ENCODE measurements at regions of chr2 and their contacts with region 1.

Region 1: DNA sequence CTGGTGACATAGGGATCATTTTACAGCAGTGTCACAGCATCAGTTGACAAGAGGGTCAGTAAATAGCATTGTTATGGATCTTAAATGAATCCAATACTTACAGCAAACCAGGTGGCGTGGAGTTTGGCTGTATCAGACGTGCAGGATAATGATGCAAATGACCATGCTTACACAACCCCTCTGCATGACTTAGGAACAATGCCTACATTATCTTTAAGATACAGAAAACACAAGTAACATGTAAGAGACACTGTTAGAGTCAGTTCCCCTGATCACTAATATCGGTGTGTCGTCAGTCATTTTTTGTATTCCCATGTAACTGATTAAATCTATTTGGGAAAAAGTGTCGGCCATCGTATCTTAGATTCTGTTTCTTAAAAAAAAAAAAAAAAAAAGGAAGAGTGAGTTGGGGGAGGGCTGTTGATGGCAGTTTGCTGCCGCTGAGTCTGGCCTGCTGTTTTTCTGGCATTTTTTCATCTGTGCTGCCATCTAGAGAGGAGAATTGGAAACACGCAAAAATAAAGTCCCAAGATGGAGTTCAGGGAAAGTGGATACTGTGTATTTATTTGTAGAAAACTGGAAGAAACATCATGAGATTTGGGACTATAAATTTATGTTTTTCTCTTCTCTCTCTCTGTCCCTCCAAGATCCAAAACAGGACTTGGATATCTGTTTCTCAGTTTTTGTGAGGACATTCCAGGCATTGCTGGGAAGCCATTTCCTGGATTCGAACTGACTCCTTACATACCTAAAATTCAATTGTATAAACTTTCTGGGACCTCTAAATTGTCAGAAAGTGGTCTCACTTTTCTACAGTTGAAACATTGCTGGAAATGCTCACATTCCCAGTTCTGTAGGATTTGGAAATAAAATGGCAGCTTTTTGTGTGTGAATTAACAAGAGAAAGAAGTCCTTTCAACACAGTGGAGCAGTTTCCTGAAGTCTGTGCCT is 60.3 kb upstream of the AGPS start:
- DNase-seq: peak in 7 of 9 donors; percentile 37 to 76 (median 72)
- ATAC-seq: peak; percentile 91
- H3K4me3 ChIP-seq: no peak overlapping the region
- H3K4me3 Mint-ChIP-seq: peak overlapping the region in 7 of 10 donors; percentile 3 to 73 (median 38)
- H3K27ac ChIP-seq: no peak overlapping the region
- H3K27ac Mint-ChIP-seq: peak overlapping the region in 8 of 9 donors; percentile 3 to 88 (median 56)
- H3K4me1 ChIP-seq: peaks cover 0 to 18% of the 10 kb centered on the region in 2 donors
- H3K4me1 Mint-ChIP-seq: peaks cover 4 to 33% (median 15%) of the 10 kb centered on the region in 7 donors
- H3K27me3 ChIP-seq: no peaks in the 10 kb centered on the region
- H3K27me3 Mint-ChIP-seq: no peaks in the 10 kb centered on the region

Region 2: DNA sequence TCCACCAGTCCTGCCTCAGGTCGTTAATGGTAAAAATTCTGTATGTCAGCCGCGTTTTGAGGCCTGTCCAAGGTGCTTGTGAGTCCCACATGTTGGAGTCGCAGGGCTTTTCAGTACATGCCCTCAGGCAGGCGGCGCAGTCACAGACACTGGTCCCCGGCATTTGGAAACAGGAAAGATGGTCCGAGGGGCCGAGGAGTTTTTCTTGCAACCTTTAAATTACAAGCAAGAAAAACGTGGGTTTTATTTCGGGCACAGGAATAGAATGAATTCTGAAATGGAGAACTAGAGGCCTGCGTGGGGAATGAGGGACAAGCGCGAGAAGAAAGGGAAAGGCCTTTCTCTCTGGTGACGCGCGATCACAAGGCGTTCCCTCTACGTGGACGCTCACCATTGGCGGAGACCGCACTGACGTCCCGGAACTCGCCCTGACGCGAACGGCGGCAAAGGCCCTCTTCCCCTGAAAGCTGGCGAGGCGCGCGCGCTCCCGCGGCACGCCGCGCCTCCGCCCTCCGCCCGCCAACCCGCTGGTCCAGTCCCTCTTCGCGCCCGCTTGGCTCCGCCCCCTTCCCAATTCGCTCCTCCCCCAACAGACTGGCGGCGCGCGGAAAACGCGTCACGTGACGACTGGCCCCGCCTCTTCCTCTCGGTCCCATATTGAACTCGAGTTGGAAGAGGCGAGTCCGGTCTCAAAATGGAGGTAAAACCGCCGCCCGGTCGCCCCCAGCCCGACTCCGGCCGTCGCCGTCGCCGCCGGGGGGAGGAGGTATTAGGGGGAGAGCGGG is 120.0 kb before region 1 on chr2 and contains the start of gene HNRNPA3:
- CTCF ChIA-PET with region 1: interaction called, 3 read pairs
- POLR2A ChIA-PET with region 1: interaction called, 6 read pairs
- intact Hi-C with region 1: loop called (anchors 1 kb)
- DNase-seq: peak; percentile 99 to 100 (median 100)
- ATAC-seq: peak; percentile 93
- H3K4me3 ChIP-seq: peak within 1 kb of the TSS; percentile 87
- H3K4me3 Mint-ChIP-seq: peak within 1 kb of the TSS; percentile 88 to 96 (median 94)
- H3K27ac ChIP-seq: peak within 1 kb of the TSS; percentile 99
- H3K27ac Mint-ChIP-seq: peak within 1 kb of the TSS; percentile 98 to 100 (median 99)
- H3K4me1 ChIP-seq: peaks cover 38 to 43% of the 10 kb centered on the region in 2 donors
- H3K4me1 Mint-ChIP-seq: peaks cover 27 to 60% (median 48%) of the 10 kb centered on the region in 7 donors
- H3K27me3 ChIP-seq: no peaks in the 10 kb centered on the region
- H3K27me3 Mint-ChIP-seq: peaks cover 0 to 6% (median 0%) of the 10 kb centered on the region in 5 donors
- total RNA-seq, gene HNRNPA3: 151 to 311 (median 184) TPM

Region 3: GRCh38 chr2:177314194-177314593 is 18.1 kb before region 1 on chr2:
- CTCF ChIA-PET with region 1: interaction called, 4 read pairs
- POLR2A ChIA-PET with region 1: interaction called, 18 read pairs
- intact Hi-C with region 1: loop called (anchors 1 to 2 kb)
- DNase-seq: no peak
- ATAC-seq: no peak
- H3K4me3 ChIP-seq: no peak overlapping the region
- H3K4me3 Mint-ChIP-seq: no peak overlapping the region
- H3K27ac ChIP-seq: no peak overlapping the region
- H3K27ac Mint-ChIP-seq: peak overlapping the region in 7 of 9 donors; percentile 36 to 97 (median 73)
- H3K4me1 ChIP-seq: peaks cover 6 to 13% of the 10 kb centered on the region in 2 donors
- H3K4me1 Mint-ChIP-seq: peaks cover 17 to 54% (median 31%) of the 10 kb centered on the region in 7 donors
- H3K27me3 ChIP-seq: no peaks in the 10 kb centered on the region
- H3K27me3 Mint-ChIP-seq: no peaks in the 10 kb centered on the region

Region 4: DNA sequence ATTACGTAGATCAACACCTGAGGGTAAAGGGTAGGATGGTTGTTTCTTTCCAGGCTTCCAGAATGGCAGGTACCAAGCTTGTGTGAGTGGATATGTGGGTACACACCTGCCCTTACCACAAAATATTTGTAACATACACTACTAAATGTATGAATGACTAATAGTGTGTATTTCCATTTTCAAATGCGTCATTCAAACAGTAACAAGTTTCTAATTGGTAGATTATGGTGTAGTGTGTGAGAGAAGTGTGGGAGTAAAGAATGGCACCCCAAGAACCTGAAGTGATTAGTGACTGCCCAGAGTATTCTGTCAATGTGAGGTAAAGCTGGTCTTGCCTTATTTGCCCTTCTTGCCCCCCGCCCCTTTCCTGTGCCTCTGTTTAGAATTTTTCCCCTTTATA is 81.4 kb after region 1 on chr2:
- CTCF ChIA-PET with region 1: interaction called, 55 read pairs
- POLR2A ChIA-PET with region 1: interaction called, 3 read pairs
- intact Hi-C with region 1: loop called (anchors 1 kb)
- DNase-seq: no peak
- ATAC-seq: no peak
- H3K4me3 ChIP-seq: no peak overlapping the region
- H3K4me3 Mint-ChIP-seq: no peak overlapping the region
- H3K27ac ChIP-seq: no peak overlapping the region
- H3K27ac Mint-ChIP-seq: peak overlapping the region in 6 of 9 donors; percentile 7 to 44 (median 23)
- H3K4me1 ChIP-seq: no peaks in the 10 kb centered on the region
- H3K4me1 Mint-ChIP-seq: peaks cover 6 to 57% (median 34%) of the 10 kb centered on the region in 7 donors
- H3K27me3 ChIP-seq: no peaks in the 10 kb centered on the region
- H3K27me3 Mint-ChIP-seq: no peaks in the 10 kb centered on the region

Region 5: DNA sequence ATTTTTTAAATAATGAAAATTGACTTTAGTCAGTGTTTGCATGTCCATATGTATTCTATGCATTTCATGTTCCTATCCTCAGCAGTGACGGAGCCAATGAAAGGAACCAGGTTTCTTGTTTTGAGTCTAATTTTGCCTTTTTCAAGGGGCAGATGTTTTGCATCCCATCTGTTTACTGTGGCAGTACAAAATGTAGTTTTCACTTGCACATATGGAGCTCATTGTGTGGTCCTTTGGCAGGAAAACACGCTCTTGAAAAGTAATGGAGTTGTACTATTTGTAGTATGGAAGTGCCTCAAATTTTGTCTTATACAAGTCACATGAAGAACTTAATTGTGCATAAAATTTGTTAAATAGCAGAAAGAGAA is 188.0 kb after region 1 on chr2:
- CTCF ChIA-PET with region 1: no interaction called
- POLR2A ChIA-PET with region 1: no interaction called
- intact Hi-C with region 1: no loop called
- DNase-seq: no peak
- ATAC-seq: no peak
- H3K4me3 ChIP-seq: no peak overlapping the region
- H3K4me3 Mint-ChIP-seq: no peak overlapping the region
- H3K27ac ChIP-seq: no peak overlapping the region
- H3K27ac Mint-ChIP-seq: no peak overlapping the region
- H3K4me1 ChIP-seq: no peaks in the 10 kb centered on the region
- H3K4me1 Mint-ChIP-seq: peaks cover 0 to 2% (median 0%) of the 10 kb centered on the region in 7 donors
- H3K27me3 ChIP-seq: no peaks in the 10 kb centered on the region
- H3K27me3 Mint-ChIP-seq: no peaks in the 10 kb centered on the region

Region 6: DNA sequence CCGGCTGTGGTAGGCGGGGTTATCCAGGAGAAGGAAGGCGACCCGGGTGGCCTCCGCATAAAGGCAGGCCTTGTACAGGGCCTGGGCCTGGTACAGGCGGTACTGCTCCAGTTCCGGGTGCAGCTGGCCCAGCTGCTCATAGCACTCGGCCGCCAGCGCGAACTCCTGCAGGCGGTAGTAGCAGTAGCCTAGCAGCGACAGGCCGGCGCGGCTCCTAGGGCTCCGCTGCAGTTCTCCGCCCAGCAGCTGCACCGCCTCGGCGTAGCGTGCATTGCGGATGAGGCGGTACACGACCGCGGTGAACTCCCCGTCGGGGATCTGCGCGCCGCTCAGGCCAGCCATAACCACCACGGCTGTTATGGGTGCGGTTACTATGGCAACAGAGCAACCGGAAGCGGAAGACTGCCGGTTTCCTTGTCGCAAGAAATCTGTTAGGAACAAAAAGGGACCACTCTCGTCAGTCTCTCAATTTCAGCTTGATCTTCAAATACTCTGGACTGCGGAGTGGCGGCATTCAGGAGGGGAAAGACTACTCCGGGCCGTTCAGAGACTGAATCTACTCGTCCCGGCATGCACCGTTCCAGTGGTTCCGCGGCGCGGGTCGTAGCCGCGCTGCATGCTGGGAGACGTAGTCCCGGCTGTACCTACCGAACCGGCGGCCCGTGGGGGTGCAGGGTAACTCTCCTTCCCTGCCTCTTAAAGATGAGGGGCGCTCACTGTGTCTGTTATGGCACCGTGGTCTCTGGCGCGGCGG is 220.3 kb after region 1 on chr2:
- CTCF ChIA-PET with region 1: no interaction called
- POLR2A ChIA-PET with region 1: no interaction called
- intact Hi-C with region 1: loop called (anchors 5 to 10 kb)
- DNase-seq: peak; percentile 82 to 96 (median 94)
- ATAC-seq: peak; percentile 94
- H3K4me3 ChIP-seq: peak overlapping the region; percentile 89
- H3K4me3 Mint-ChIP-seq: peak overlapping the region; percentile 87 to 99 (median 94)
- H3K27ac ChIP-seq: peak overlapping the region; percentile 100
- H3K27ac Mint-ChIP-seq: peak overlapping the region; percentile 98 to 100 (median 99)
- H3K4me1 ChIP-seq: no peaks in the 10 kb centered on the region
- H3K4me1 Mint-ChIP-seq: peaks cover 4 to 29% (median 14%) of the 10 kb centered on the region in 7 donors
- H3K27me3 ChIP-seq: no peaks in the 10 kb centered on the region
- H3K27me3 Mint-ChIP-seq: peaks cover 0 to 14% (median 4%) of the 10 kb centered on the region in 5 donors

Region 7: GRCh38 chr2:177572236-177572671 is 239.9 kb after region 1 on chr2:
- CTCF ChIA-PET with region 1: no interaction called
- POLR2A ChIA-PET with region 1: no interaction called
- intact Hi-C with region 1: no loop called
- DNase-seq: no peak
- ATAC-seq: no peak
- H3K4me3 ChIP-seq: no peak overlapping the region
- H3K4me3 Mint-ChIP-seq: no peak overlapping the region
- H3K27ac ChIP-seq: no peak overlapping the region
- H3K27ac Mint-ChIP-seq: no peak overlapping the region
- H3K4me1 ChIP-seq: no peaks in the 10 kb centered on the region
- H3K4me1 Mint-ChIP-seq: peaks cover 0 to 3% (median 0%) of the 10 kb centered on the region in 7 donors
- H3K27me3 ChIP-seq: no peaks in the 10 kb centered on the region
- H3K27me3 Mint-ChIP-seq: peaks cover 0 to 8% (median 6%) of the 10 kb centered on the region in 5 donors

Region 8: GRCh38 chr2:177618255-177619253 is 286.2 kb after region 1 on chr2:
- CTCF ChIA-PET with region 1: no interaction called
- POLR2A ChIA-PET with region 1: no interaction called
- intact Hi-C with region 1: loop called in 1 of 2 experiments (anchors 1 kb)
- DNase-seq: peak; percentile 86 to 93 (median 91)
- ATAC-seq: peak; percentile 95
- H3K4me3 ChIP-seq: peak overlapping the region; percentile 86
- H3K4me3 Mint-ChIP-seq: peak overlapping the region; percentile 80 to 99 (median 96)
- H3K27ac ChIP-seq: peak overlapping the region; percentile 96
- H3K27ac Mint-ChIP-seq: peak overlapping the region; percentile 98 to 100 (median 99)
- H3K4me1 ChIP-seq: no peaks in the 10 kb centered on the region
- H3K4me1 Mint-ChIP-seq: peaks cover 0 to 15% (median 9%) of the 10 kb centered on the region in 7 donors
- H3K27me3 ChIP-seq: no peaks in the 10 kb centered on the region
- H3K27me3 Mint-ChIP-seq: peaks cover 0 to 35% (median 9%) of the 10 kb centered on the region in 5 donors

Region 9: GRCh38 chr2:177763532-177764265 is 431.4 kb after region 1 on chr2:
- CTCF ChIA-PET with region 1: interaction called, 7 read pairs
- POLR2A ChIA-PET with region 1: no interaction called
- intact Hi-C with region 1: loop called (anchors 1 kb)
- DNase-seq: peak; percentile 51 to 75 (median 68)
- ATAC-seq: peak; percentile 95
- H3K4me3 ChIP-seq: peak overlapping the region; percentile 20
- H3K4me3 Mint-ChIP-seq: peak overlapping the region in 8 of 10 donors; percentile 20 to 55 (median 30)
- H3K27ac ChIP-seq: no peak overlapping the region
- H3K27ac Mint-ChIP-seq: peak overlapping the region in 1 of 9 donors; percentile 42
- H3K4me1 ChIP-seq: peaks cover 0 to 4% of the 10 kb centered on the region in 2 donors
- H3K4me1 Mint-ChIP-seq: peaks cover 0 to 11% (median 6%) of the 10 kb centered on the region in 7 donors
- H3K27me3 ChIP-seq: no peaks in the 10 kb centered on the region
- H3K27me3 Mint-ChIP-seq: peaks cover 10 to 28% (median 24%) of the 10 kb centered on the region in 5 donors